GM18951 (cell line): ENCODE measurements at regions of chr5 and their contacts with region 1.

Region 1: DNA sequence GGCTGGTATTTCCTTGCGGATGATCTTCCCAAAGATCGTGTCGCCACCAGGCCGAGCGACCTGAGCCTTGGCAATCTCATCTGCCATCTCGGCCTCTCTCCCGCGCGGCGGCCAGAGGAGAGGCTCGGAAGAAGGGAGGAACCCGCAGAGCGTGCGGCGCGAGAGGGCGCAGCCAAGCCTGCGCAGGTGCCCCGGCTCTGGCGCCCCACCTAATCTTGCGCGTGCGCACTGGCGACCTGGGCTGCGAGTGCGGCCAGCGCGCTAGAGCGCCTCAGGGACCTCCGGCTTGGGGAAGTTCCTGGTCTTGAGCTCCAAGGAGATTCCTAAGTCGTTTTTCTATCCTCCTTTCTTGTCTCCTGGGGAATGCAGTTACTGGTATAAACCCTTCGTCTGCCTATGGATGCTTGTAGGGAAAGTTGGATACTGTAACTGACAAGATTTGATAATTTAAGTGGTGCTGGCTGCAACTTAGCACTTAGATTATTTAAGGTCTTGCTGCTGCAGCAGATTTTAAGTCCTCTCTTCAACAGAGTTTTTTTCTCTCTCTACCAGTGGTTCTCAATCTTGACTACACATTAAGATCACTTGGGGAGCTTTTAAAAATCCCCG is at the start of gene HINT1:
- POLR2A ChIP-seq: peak; percentile 87

Region 2: GRCh38 chr5:130436430-130436829 is 728.8 kb before region 1 on chr5:
- in situ Hi-C with region 1: no loop called
- POLR2A ChIP-seq: no peak

Region 3: DNA sequence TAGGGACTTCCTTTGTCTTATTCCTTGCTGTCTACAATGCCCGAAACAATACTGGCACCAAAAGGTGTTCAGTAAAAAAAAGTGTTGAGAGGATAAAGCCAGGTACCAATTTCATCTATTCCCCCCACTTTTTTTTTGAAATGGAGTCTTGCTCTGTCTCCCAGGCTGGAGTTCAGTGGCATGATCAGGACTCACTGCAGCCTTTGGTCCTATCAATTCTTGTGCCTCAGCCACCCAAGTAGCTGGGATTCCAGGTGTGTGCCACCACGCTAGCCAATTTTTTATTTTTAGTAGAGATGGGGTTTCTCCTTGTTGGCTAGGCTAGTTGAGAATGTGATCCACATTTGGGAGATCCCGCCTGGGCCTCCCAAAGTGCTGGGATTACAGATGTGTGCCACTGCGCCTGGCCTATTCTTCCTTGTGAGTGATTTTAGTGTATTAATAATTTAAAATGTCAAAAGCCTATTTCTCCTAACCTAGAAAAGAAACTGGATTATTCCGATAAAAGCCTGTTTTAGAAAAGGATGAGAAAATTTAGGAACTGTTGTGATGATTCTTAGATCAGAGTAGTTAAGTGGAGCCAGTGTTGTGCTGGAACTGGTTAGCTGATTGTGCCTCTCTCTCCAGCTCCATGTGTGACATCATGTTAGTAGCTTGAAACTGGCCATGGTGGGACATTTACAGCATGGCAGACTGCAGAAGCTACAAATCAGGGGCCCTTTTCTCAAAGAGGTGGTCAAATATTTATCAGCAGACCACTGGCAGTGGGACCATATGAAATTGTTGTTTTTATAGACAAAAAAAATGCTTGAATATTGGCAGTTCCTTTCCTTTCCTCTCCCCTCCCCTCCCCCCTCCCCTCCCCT is 112.9 kb after region 1 on chr5:
- in situ Hi-C with region 1: loop called (anchors 10 kb)
- POLR2A ChIP-seq: no peak

Region 4: DNA sequence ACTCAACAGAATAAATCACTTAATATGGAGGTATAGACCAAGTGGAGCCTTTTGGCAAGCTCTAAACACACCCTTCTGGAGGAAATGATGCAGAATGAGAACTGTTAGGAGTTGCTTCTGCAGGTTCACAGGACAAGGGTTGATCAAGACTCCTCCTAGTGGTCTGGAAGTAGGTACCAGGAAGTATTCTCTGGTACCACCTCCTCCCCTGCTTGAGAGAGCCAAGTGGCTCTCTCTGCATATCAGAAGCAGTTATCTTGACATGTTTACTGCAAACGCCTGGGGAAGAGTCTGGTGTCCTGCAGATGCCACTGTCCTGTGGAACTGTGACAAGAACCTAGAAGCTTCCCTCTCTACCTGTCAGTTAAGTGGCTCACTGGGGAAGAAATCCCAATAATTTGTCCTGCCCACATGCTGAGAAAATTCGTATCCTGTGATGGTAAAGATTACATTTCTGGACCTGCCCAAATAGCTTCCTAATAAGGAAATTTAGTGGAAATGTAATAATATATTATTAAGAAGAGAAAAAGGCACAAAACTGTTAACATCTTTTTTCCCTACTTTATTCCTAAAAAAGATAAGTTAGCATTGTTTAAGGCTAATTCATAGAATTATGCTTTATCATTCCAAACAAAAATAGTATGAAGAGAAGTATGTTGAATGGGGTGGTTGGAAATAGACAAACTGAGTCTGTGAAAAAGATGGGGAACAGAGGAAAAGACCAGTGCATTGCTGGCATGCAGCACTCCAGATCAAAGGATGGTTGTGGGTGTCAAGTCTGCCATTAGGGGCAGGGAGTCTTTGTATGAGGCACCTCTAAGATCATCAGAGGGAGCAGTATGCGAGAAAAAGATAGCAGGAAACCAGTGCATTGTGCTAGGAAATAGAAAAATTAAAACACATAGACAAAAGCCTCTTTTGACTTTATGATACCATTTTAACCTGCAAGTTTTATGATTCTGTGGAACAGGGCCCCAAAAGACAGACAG is 217.5 kb after region 1 on chr5:
- in situ Hi-C with region 1: loop called (anchors 5 kb)
- POLR2A ChIP-seq: no peak

Region 5: DNA sequence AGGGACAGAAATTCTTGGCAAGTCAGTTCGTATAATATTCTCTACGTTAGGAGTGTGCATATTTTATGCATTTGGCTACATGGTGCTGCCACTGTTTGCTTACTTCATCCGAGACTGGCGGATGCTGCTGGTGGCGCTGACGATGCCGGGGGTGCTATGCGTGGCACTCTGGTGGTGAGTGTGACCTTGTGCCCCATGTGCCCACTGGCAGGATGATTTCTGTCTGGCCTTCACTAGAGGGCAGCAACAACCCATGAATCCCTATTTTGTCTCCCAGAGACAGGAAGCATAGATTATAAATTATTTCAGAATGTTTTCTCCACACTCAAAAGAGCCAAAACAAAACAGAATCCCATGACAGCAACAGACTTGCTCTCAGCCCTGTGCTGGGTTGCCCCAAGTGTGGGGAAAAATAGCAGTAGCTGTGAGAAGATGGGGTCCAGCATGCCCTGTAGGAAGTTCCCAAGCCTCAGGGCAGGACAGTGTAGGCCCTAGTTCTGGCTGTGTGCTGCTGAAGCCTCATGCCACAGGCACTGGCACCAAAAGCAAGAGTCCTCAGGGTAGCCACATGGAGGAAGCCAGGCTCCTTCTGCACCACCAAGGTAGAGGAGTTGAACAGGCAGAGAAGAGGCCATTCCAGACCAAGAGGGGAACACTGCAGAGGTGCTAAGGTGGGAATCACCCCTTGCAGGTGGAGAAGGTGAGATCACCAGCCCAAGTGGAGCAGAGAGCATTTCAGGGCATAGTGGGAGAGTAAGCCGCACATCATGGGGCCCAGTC is 1220.3 kb after region 1 on chr5:
- in situ Hi-C with region 1: no loop called
- POLR2A ChIP-seq: no peak